ENCODE measurements at regions of chr6 and their contacts with region 1.

Region 1: GRCh38 chr6:154705471-154706113 is 27.6 kb upstream of the SCAF8 start:
- DNase-seq: peak; percentile 47 to 68 (median 67)
- H3K4me3 ChIP-seq: no peak overlapping the region
- H3K27ac ChIP-seq: no peak overlapping the region
- H3K4me1 ChIP-seq: peaks cover 0 to 10% (median 3%) of the 10 kb centered on the region in 4 experiments
- H3K27me3 ChIP-seq: no peaks in the 10 kb centered on the region

Region 2: DNA sequence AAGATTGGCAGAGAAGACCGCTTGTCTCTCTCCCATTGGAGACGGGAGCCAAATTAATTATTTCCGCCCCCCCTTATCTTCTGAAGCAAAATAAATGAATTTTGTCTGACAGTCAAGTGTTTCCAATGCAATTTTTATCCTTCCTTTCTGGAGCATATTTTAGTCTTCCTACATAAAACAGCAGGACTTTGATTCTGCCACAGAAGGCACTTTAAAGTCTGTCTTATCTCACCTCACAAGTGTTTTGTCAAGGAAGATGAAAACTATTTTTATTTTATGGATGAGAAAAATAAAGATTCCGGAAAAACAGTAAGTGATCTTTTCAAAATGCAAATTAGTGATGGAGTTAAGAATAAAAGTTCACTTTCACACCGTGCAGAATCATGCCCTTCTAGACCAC is 526.2 kb before region 1 on chr6:
- CTCF ChIA-PET with region 1: no interaction called
- POLR2A ChIA-PET with region 1: no interaction called
- DNase-seq: no peak
- H3K4me3 ChIP-seq: no peak overlapping the region
- H3K27ac ChIP-seq: no peak overlapping the region
- H3K4me1 ChIP-seq: peaks cover 0 to 7% (median 0%) of the 10 kb centered on the region in 4 experiments
- H3K27me3 ChIP-seq: no peaks in the 10 kb centered on the region

Region 3: DNA sequence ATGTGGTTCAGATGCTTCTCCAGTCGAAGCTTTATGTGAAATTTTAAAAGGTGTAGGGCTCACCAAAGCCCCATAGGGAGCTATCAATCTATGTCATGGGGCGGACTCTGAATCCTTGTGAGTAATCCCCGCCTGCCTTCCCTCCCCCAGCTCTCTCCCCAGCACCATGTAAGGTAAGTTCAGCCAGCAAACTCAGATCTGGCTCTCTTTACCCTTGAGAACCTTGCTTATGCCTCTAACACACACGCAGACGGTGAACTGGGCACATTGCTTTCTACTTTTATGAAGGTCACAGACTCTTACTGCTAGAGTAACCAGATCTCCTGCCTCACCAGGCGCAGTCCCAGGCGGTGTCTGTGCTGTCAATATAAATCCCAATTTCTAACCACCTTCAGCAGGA is 112.5 kb before region 1 on chr6:
- CTCF ChIA-PET with region 1: no interaction called
- POLR2A ChIA-PET with region 1: no interaction called
- DNase-seq: no peak
- H3K4me3 ChIP-seq: no peak overlapping the region
- H3K27ac ChIP-seq: no peak overlapping the region
- H3K4me1 ChIP-seq: no peaks in the 10 kb centered on the region
- H3K27me3 ChIP-seq: no peaks in the 10 kb centered on the region

Region 4: DNA sequence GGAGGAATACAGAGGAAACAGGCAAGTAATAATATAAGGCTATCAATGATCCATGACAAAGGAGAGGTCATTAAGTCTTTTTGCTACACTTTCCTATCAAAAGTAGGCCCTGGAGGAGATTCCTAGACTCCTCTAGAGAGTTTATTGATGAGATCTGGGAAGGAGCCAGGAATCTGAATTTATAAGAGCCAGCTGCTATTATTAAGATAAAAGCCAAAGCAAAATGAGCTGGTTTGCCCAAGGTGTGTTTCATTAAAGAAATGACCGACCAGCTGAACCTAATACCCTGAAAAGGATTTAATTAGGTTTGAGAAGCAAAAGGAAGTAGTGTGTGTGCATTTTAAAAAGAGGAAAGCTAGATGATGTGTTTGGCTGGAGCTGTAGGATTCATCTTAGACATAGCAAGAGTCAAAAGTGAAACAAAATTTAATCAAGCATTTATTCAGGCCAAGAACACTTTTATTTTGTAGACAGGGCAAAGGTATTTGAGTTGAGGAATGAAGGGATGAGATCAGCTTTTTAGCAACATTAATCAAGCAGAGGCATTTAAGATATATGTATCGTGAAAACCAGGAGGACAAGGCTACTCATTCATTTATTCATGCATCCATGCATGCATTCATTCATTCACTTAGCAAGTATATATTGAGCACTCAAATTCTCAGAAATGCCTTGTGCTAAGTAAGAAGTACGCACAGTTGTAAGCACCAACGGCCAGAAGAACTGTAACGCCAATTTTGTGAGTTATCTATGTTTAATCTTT is 15.9 kb before region 1 on chr6:
- CTCF ChIA-PET with region 1: interaction called, 20 read pairs
- POLR2A ChIA-PET with region 1: no interaction called
- DNase-seq: no peak
- H3K4me3 ChIP-seq: no peak overlapping the region
- H3K27ac ChIP-seq: no peak overlapping the region
- H3K4me1 ChIP-seq: peaks cover 0 to 4% (median under 1%) of the 10 kb centered on the region in 4 experiments
- H3K27me3 ChIP-seq: no peaks in the 10 kb centered on the region

Region 5: GRCh38 chr6:154805288-154805911 is 99.8 kb after region 1 on chr6:
- CTCF ChIA-PET with region 1: interaction called, 51 read pairs
- POLR2A ChIA-PET with region 1: no interaction called
- DNase-seq: peak; percentile 67 to 83 (median 78)
- H3K4me3 ChIP-seq: no peak overlapping the region
- H3K27ac ChIP-seq: no peak overlapping the region
- H3K4me1 ChIP-seq: no peaks in the 10 kb centered on the region
- H3K27me3 ChIP-seq: no peaks in the 10 kb centered on the region